ENCODE measurements at regions of chrX and their contacts with region 1.

Region 1: DNA sequence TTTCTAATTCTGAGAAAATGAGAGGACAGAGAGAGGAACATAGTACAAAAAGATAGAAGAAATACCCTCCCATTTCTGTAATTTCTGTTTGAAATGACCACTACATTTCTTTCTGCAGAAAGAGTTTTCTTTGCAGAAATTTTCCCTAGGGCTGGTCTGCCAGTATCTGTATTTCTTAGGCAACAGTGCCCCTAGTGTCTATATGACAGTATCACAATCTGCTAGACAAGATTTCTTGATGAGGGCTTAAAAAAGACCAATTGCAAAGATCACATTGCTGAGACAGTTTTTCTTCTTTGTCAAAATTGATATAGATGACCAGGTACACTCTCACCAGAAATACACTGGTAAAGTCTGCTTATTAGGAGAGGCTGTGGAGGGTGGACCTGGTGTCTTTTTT is 81.0 kb upstream of the ZDHHC15 start:
- DNase-seq: peak; percentile 28
- ATAC-seq: peak; percentile 64; the same call in 1 of the 2 replicates
- H3K4me3 ChIP-seq: no peak overlapping the region
- H3K27ac ChIP-seq: no peak overlapping the region
- H3K4me1 ChIP-seq: no peaks in the 10 kb centered on the region
- H3K27me3 ChIP-seq: no peaks in the 10 kb centered on the region
- CTCF ChIP-seq: peak; percentile 52
- POLR2A ChIP-seq: no peak
- RAD21 ChIP-seq: peak; percentile 60

Region 2: GRCh38 chrX:75038925-75039324 is 564.9 kb before region 1 on chrX:
- CTCF ChIA-PET with region 1: no interaction called
- POLR2A ChIA-PET with region 1: no interaction called
- dilution Hi-C with region 1: no loop called
- in situ Hi-C with region 1: no loop called
- intact Hi-C with region 1: loop called (anchors 5 kb)
- DNase-seq: peak; percentile 32
- ATAC-seq: peak; percentile 56
- H3K4me3 ChIP-seq: no peak overlapping the region
- H3K27ac ChIP-seq: no peak overlapping the region
- H3K4me1 ChIP-seq: no peaks in the 10 kb centered on the region
- H3K27me3 ChIP-seq: no peaks in the 10 kb centered on the region
- CTCF ChIP-seq: peak; percentile 37
- POLR2A ChIP-seq: no peak
- RAD21 ChIP-seq: peak; percentile 45

Region 3: GRCh38 chrX:75421688-75422230 is 182.1 kb before region 1 on chrX:
- CTCF ChIA-PET with region 1: no interaction called
- POLR2A ChIA-PET with region 1: no interaction called
- dilution Hi-C with region 1: no loop called
- in situ Hi-C with region 1: no loop called
- intact Hi-C with region 1: no loop called
- DNase-seq: no peak
- ATAC-seq: no peak
- H3K4me3 ChIP-seq: no peak overlapping the region
- H3K27ac ChIP-seq: no peak overlapping the region
- H3K4me1 ChIP-seq: no peaks in the 10 kb centered on the region
- H3K27me3 ChIP-seq: no peaks in the 10 kb centered on the region
- CTCF ChIP-seq: no peak
- POLR2A ChIP-seq: no peak
- RAD21 ChIP-seq: no peak

Region 4: DNA sequence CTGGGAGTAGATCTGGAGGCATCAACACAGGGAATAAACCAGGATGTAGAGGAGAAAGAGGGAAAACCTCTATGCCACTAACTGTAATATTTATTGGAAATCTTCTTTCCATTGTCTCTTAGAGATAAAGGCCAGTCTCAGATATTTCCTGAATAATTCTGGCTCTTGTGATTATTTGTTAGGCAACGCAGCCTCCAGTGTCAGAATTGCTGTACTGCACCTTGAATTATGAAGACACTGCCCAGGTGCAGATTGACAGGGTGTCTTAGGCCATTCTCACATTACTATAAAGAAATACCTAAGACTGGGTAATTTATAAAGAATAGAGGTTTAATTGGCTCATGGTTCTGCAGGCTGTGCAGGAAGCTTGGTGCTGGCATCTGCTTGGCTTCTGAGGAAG is 19.7 kb after region 1 on chrX:
- CTCF ChIA-PET with region 1: no interaction called
- POLR2A ChIA-PET with region 1: no interaction called
- dilution Hi-C with region 1: no loop called
- in situ Hi-C with region 1: no loop called
- intact Hi-C with region 1: no loop called
- DNase-seq: no peak
- ATAC-seq: no peak
- H3K4me3 ChIP-seq: no peak overlapping the region
- H3K27ac ChIP-seq: no peak overlapping the region
- H3K4me1 ChIP-seq: no peaks in the 10 kb centered on the region
- H3K27me3 ChIP-seq: no peaks in the 10 kb centered on the region
- CTCF ChIP-seq: no peak
- POLR2A ChIP-seq: no peak
- RAD21 ChIP-seq: no peak